Heart left ventricle (tissue), 16 donors: ENCODE measurements at regions of chr7 and their contacts with region 1.

Region 1: GRCh38 chr7:105402221-105403095 is 13.7 kb upstream of the SRPK2 start:
- DNase-seq: no peak
- ATAC-seq: no peak
- H3K4me3 ChIP-seq: no peak overlapping the region
- H3K27ac ChIP-seq: no peak overlapping the region
- H3K4me1 ChIP-seq: peaks cover 0 to 15% (median 0%) of the 10 kb centered on the region in 12 donors
- H3K27me3 ChIP-seq: no peaks in the 10 kb centered on the region
- CTCF ChIP-seq: no peak
- POLR2A ChIP-seq: no peak

Region 2: DNA sequence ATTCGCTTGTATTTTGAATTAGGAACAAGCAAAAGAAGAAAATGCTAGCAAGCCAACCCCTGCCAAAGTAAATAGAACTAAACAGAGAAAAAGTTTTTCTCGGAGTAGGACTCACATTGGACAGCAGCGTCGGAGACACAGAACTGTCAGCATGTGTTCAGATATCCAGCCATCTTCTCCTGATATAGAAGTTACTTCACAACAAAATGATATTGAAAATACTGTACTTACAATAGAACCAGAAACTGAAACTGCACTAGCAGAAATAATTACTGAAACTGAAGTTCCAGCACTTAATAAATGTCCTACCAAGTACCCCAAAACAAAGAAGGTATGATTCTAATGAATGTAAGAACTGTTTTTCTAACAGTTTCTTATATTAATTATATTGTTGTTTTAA is 300.6 kb before region 1 on chr7:
- intact Hi-C with region 1: no loop called
- DNase-seq: no peak
- ATAC-seq: no peak
- H3K4me3 ChIP-seq: no peak overlapping the region
- H3K27ac ChIP-seq: peak overlapping the region in 1 of 12 donors; percentile 38
- H3K4me1 ChIP-seq: peaks cover 0 to 29% (median 9%) of the 10 kb centered on the region in 12 donors
- H3K27me3 ChIP-seq: no peaks in the 10 kb centered on the region
- CTCF ChIP-seq: no peak
- POLR2A ChIP-seq: no peak

Region 3: GRCh38 chr7:105487579-105488571 is 85.4 kb after region 1 on chr7:
- intact Hi-C with region 1: loop called in 1 of 10 experiments (anchors 5 kb)
- DNase-seq: peak in 1 of 5 donors; percentile 11
- ATAC-seq: peak in 3 of 4 donors; percentile 71 to 87 (median 87)
- H3K4me3 ChIP-seq: no peak overlapping the region
- H3K27ac ChIP-seq: peak overlapping the region in 8 of 12 donors; percentile 2 to 29 (median 18)
- H3K4me1 ChIP-seq: peaks cover 0 to 12% (median 4%) of the 10 kb centered on the region in 12 donors
- H3K27me3 ChIP-seq: no peaks in the 10 kb centered on the region
- CTCF ChIP-seq: peak; percentile 12 to 58 (median 40)
- POLR2A ChIP-seq: peak in 1 of 2 donors; percentile 10

Region 4: DNA sequence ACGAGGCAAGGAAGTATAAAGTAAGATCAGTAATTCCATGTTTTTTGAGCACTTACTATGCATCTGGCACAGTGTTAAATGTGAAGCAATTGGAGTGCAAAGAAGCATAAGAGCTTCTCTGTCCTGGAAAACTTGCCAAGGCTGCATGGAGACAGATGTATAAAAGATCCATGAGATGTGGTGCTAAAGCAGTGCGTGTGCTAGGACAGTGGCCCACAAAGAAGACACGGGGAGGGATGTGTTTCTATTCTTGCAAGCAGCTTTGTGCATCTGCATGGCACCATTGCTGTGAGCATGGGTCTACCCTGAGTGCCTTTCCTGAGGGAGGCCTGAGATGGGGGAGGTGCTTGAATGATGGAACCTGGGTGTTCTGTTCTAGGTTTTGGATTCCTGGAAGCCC is 555.6 kb after region 1 on chr7:
- intact Hi-C with region 1: no loop called
- DNase-seq: no peak
- ATAC-seq: no peak
- H3K4me3 ChIP-seq: no peak overlapping the region
- H3K27ac ChIP-seq: no peak overlapping the region
- H3K4me1 ChIP-seq: no peaks in the 10 kb centered on the region
- H3K27me3 ChIP-seq: no peaks in the 10 kb centered on the region
- CTCF ChIP-seq: no peak
- POLR2A ChIP-seq: no peak